CD8-positive, alpha-beta T cell (primary cell): ENCODE measurements at regions of chrX and their contacts with region 1.

Region 1: DNA sequence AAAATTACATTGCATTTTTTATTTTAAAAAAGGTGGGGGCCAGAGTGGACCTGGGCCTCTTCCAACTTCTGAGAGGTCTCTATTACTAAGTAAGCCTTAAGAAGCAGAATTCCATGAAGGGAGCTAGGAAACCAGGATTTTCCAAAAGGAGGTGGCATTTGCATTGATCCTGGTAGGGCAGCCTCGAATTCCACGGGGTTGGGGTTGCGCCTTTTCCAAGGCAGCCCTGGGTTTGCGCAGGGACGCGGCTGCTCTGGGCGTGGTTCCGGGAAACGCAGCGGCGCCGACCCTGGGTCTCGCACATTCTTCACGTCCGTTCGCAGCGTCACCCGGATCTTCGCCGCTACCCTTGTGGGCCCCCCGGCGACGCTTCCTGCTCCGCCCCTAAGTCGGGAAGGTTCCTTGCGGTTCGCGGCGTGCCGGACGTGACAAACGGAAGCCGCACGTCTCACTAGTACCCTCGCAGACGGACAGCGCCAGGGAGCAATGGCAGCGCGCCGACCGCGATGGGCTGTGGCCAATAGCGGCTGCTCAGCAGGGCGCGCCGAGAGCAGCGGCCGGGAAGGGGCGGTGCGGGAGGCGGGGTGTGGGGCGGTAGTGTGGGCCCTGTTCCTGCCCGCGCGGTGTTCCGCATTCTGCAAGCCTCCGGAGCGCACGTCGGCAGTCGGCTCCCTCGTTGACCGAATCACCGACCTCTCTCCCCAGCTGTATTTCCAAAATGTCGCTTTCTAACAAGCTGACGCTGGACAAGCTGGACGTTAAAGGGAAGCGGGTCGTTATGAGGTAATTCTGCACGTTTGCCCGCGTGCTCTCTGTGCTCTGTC is at the start of gene PGK1:
- DNase-seq: peak; percentile 85 to 97 (median 90)
- ATAC-seq: peak; percentile 93
- H3K4me3 ChIP-seq: peak within 1 kb of the TSS; percentile 95 to 99
- H3K4me3 Mint-ChIP-seq: peak within 1 kb of the TSS; percentile 94
- H3K27ac ChIP-seq: peak within 1 kb of the TSS; percentile 98
- H3K27ac Mint-ChIP-seq: peak within 1 kb of the TSS; percentile 96
- H3K4me1 ChIP-seq: peaks cover 47% of the 10 kb centered on the region
- H3K4me1 Mint-ChIP-seq: peaks cover 46% of the 10 kb centered on the region
- H3K27me3 ChIP-seq: no peaks in the 10 kb centered on the region
- H3K27me3 Mint-ChIP-seq: no peaks in the 10 kb centered on the region
- CTCF ChIP-seq: no peak
- total RNA-seq, gene PGK1: 364 to 374 TPM

Region 2: DNA sequence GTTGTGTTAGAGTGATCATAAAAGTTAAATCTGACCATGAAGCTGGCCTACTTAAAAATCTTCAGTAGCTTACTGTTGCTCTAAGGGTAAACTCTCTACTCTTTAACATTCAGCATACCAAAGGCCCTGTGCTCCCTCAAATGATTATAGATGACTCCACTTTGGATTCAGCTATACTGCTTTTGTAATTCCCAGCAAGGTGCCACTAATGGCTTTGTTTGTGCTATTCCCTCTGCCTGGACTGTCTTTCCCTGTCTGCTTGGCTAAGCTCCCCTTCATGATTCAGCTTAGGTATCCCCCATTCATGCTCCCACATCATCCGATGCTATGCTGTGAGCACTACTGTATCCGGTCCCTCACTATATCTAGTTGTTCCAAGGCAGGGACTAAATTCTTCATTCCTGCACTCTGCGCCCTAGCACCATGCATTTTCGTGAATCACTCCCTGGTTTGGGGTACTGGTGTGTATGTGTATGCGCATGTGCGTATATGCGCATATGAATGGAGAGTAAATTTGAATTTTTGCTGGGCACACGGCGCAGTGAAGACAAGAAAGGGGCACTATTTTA is 1931.4 kb before region 1 on chrX:
- CTCF ChIA-PET with region 1: no interaction called
- POLR2A ChIA-PET with region 1: no interaction called
- intact Hi-C with region 1: loop called in 1 of 2 experiments (anchors 10 kb)
- DNase-seq: no peak
- ATAC-seq: peak; percentile 51
- H3K4me3 ChIP-seq: peak overlapping the region; percentile 70 to 71
- H3K4me3 Mint-ChIP-seq: peak overlapping the region; percentile 94
- H3K27ac ChIP-seq: peak overlapping the region; percentile 81 to 90
- H3K27ac Mint-ChIP-seq: peak overlapping the region; percentile 98
- H3K4me1 ChIP-seq: peaks cover 32% of the 10 kb centered on the region
- H3K4me1 Mint-ChIP-seq: peaks cover 57% of the 10 kb centered on the region
- H3K27me3 ChIP-seq: no peaks in the 10 kb centered on the region
- H3K27me3 Mint-ChIP-seq: no peaks in the 10 kb centered on the region
- CTCF ChIP-seq: no peak

Region 3: GRCh38 chrX:77223046-77223445 is 880.8 kb before region 1 on chrX:
- CTCF ChIA-PET with region 1: no interaction called
- POLR2A ChIA-PET with region 1: no interaction called
- intact Hi-C with region 1: no loop called
- DNase-seq: no peak
- ATAC-seq: no peak
- H3K4me3 ChIP-seq: no peak overlapping the region
- H3K4me3 Mint-ChIP-seq: no peak overlapping the region
- H3K27ac ChIP-seq: no peak overlapping the region
- H3K27ac Mint-ChIP-seq: no peak overlapping the region
- H3K4me1 ChIP-seq: no peaks in the 10 kb centered on the region
- H3K4me1 Mint-ChIP-seq: no peaks in the 10 kb centered on the region
- H3K27me3 ChIP-seq: no peaks in the 10 kb centered on the region
- H3K27me3 Mint-ChIP-seq: peaks cover 8% of the 10 kb centered on the region
- CTCF ChIP-seq: no peak

Region 4: DNA sequence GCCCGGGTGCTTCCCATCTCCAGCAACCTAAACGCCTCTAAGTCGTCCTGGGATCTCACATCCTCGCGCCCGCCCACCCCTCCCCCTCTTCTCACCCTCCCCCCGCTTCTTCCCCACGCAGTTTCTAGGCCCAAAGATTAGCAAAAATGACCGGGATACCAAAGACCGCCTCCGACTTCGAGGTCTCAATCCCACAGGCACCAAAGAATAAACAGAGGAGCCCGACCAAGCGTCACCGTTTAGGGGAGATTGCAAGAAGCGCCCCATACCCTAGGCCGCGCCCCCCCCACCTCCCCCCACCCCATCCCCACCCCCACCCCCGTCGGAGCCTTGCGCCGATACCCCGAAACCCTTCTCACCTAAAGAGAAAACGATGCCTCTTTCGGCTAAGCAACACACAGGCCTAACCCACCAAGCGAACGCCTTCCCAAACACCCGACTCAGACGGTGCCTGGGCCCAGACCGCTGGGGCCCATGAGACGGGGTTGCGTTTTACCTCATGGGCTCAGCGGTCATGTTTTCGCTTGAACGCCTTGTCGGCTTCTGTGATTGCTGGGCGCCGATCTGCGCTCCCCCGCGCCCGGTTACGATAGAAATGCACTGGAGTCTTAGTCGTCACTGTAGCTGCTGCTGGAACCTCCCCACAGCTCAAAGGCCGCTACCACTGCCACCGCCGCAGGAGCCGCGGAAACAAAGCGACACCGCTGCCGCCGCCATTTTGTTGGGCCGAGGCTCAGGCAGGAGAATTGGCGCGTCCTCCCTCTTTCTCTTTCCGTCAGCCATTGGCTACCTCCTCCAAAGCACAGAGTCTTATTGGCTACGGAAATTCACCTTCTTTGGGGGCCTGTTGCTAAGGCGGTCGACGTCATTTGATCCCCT is 318.1 kb before region 1 on chrX and contains the start of gene ATRX:
- CTCF ChIA-PET with region 1: no interaction called
- POLR2A ChIA-PET with region 1: no interaction called
- intact Hi-C with region 1: loop called (anchors 5 kb)
- DNase-seq: peak; percentile 55 to 91 (median 73)
- ATAC-seq: peak; percentile 91
- H3K4me3 ChIP-seq: peak within 1 kb of the TSS; percentile 85 to 93
- H3K4me3 Mint-ChIP-seq: peak within 1 kb of the TSS; percentile 100
- H3K27ac ChIP-seq: peak within 1 kb of the TSS; percentile 92 to 93
- H3K27ac Mint-ChIP-seq: peak within 1 kb of the TSS; percentile 100
- H3K4me1 ChIP-seq: peaks cover 16% of the 10 kb centered on the region
- H3K4me1 Mint-ChIP-seq: peaks cover 38% of the 10 kb centered on the region
- H3K27me3 ChIP-seq: no peaks in the 10 kb centered on the region
- H3K27me3 Mint-ChIP-seq: no peaks in the 10 kb centered on the region
- CTCF ChIP-seq: no peak
- total RNA-seq, gene ATRX: 61.2 to 65.7 TPM

Region 5: DNA sequence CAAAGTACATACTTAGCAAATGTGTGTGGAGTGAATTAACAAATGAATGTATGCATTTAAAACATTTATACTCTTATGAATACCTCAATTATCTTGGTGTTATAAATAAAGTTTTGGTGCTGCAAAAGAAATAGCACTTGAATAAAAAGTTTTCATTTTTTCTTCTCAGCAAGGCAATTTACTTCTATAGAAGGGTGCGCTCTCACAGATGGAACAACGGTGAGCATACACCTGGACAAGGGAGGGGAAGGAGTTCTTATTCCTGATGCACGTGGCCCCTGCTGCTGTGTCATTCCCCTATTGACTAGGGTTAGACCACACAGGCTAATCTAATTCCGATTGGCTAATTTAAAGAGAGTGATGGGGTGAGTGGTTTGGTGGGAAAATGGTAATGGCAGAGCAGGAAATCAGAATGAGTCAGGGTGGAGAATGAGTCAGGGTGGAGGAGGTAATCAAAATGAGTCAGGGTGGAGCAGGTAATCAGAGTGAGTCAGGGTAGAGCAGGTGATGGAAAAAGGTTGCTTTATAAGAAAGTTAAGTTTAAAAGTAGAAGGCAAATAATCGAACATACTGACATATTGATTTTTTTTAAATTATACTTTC is 27.9 kb before region 1 on chrX:
- CTCF ChIA-PET with region 1: interaction called, 3 read pairs
- POLR2A ChIA-PET with region 1: interaction called, 5 read pairs
- intact Hi-C with region 1: loop called (anchors 1 to 2 kb)
- DNase-seq: no peak
- ATAC-seq: no peak
- H3K4me3 ChIP-seq: no peak overlapping the region
- H3K4me3 Mint-ChIP-seq: no peak overlapping the region
- H3K27ac ChIP-seq: no peak overlapping the region
- H3K27ac Mint-ChIP-seq: no peak overlapping the region
- H3K4me1 ChIP-seq: peaks cover 9% of the 10 kb centered on the region
- H3K4me1 Mint-ChIP-seq: peaks cover 16% of the 10 kb centered on the region
- H3K27me3 ChIP-seq: no peaks in the 10 kb centered on the region
- H3K27me3 Mint-ChIP-seq: no peaks in the 10 kb centered on the region
- CTCF ChIP-seq: no peak

Region 6: DNA sequence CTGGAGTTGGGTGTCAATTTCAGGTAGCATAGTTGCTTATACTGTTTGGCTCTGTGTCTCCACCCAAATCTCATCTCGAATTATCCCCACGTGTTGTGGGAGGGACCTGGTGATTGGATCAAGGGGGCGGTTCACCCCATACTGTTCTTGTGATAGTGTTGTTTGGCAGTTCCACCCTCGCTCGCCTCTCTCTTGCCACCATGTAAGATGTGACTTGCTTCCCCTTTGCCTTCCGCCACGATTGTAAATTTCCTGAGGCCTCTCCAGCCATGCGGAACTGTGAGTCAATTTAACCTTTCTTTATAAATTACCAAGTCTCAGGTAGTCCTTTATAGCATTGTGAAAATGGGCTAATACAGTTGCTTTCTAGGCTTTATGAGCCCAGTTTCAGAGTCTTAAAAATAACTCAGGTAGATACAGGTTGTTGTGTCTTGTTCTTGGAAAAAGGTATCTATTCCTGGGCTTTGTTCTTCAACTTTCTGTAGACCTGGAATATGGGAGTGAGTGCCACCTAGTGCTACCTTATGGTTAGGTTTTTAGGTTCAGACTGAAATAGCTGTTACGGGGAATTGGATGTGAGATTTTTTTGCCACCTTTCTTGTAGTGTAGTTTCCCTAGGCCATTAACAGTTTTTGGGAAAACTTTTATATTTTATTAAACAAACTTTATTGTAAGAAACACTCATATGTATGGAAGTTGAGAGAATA is 15.8 kb after region 1 on chrX:
- CTCF ChIA-PET with region 1: interaction called, 3 read pairs
- POLR2A ChIA-PET with region 1: interaction called, 3 read pairs
- intact Hi-C with region 1: loop called in 1 of 2 experiments (anchors 2 kb)
- DNase-seq: no peak
- ATAC-seq: peak; percentile 12
- H3K4me3 ChIP-seq: no peak overlapping the region
- H3K4me3 Mint-ChIP-seq: no peak overlapping the region
- H3K27ac ChIP-seq: no peak overlapping the region
- H3K27ac Mint-ChIP-seq: no peak overlapping the region
- H3K4me1 ChIP-seq: peaks cover 28% of the 10 kb centered on the region
- H3K4me1 Mint-ChIP-seq: peaks cover 66% of the 10 kb centered on the region
- H3K27me3 ChIP-seq: no peaks in the 10 kb centered on the region
- H3K27me3 Mint-ChIP-seq: no peaks in the 10 kb centered on the region
- CTCF ChIP-seq: no peak

Region 7: DNA sequence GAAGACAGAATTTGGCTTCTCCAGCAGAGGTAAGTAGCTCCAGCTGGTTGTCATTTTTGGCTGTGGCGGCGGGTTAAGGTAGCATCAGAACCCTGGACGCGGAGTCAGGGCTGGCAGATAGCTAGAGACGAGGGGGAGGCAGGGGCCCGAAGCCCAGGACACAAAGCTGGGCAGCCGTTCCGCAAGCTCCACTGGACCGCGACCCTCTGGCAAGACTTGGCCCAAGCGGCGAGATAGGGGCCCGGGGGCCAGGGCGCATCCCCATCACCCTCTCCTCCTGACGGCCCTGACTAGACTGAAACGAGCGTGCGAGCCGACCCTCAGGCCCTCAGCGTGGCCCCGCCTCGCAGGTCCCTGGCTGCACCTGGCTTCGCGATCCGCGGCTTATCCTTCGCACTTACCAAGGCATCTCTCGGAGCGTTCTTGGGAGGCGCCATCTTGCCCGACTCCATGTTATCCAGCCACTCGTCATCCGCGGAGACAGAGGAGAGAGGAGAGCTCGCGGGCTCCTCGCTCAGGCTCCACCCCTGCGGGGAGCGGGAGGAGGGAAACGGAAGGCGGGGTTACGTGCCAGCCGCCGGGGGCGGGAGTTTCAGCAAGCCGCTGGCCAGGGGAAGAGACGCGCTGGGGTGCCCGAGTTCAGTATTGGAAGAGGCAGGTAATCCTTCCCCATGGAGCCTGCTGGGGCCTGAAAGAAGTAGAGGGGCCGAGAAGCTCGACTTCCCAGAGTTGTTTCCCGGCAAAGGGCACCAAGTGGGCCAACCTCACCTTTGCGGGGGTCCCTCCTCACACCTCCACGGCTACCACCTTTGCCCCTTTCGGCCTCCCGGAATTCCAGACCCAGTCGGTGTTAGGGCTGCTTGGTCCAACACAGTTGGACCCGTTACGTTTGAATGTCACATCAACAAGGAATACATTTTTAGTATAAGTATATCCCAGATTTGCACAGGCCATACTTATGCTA is 35.6 kb after region 1 on chrX and contains the start of gene TAF9B:
- CTCF ChIA-PET with region 1: no interaction called
- POLR2A ChIA-PET with region 1: interaction called, 5 read pairs
- intact Hi-C with region 1: loop called in 1 of 2 experiments (anchors 1 kb)
- DNase-seq: peak; percentile 68 to 89 (median 77)
- ATAC-seq: peak; percentile 97
- H3K4me3 ChIP-seq: peak within 1 kb of the TSS; percentile 73 to 93
- H3K4me3 Mint-ChIP-seq: peak within 1 kb of the TSS; percentile 93
- H3K27ac ChIP-seq: peak within 1 kb of the TSS; percentile 77 to 83
- H3K27ac Mint-ChIP-seq: peak within 1 kb of the TSS; percentile 92
- H3K4me1 ChIP-seq: no peaks in the 10 kb centered on the region
- H3K4me1 Mint-ChIP-seq: peaks cover 9% of the 10 kb centered on the region
- H3K27me3 ChIP-seq: no peaks in the 10 kb centered on the region
- H3K27me3 Mint-ChIP-seq: no peaks in the 10 kb centered on the region
- CTCF ChIP-seq: no peak
- total RNA-seq, gene TAF9B: 5.7 to 7.1 TPM